ENCODE measurements at regions of chr3 and their contacts with region 1.

Region 1: DNA sequence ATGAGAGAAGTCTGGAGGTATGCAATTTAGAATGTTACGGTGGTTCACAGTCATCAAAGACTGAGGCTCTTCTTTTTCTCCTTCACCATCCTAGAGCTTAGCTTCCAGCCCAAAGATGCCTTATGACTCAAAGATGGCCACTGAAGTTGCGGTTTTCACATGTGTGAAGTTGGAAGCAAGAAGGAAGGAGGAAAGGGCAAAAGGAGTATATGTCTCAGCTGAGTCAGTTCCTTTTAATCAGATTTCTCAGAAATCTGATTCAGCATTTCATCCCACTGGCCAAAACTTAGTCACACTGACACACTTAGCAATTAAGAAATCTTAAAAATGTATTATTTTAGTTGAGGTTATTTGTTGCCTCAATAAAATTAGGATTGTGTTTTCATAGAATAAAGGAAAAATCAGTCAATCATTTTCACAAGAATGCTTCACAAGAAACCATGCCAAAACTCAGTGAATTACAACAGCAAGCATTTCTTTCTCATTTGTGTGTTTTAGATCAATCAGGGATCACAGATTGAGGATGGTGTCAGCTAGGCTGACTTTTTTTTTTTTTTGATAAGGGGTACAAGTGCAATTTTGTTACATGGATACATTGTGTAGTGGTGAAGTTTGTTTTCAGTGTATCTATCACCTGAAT is 211.1 kb upstream of the GADL1 start:
- DNase-seq: peak; percentile 94
- ATAC-seq: peak; percentile 89
- H3K4me3 ChIP-seq: peak overlapping the region; percentile 8; the same call in 1 of the 2 replicates
- H3K27ac ChIP-seq: peak overlapping the region; percentile 92
- H3K4me1 ChIP-seq: peaks cover 34% of the 10 kb centered on the region
- H3K27me3 ChIP-seq: no peaks in the 10 kb centered on the region
- CTCF ChIP-seq: no peak

Region 2: GRCh38 chr3:30970183-30970582 is 135.4 kb before region 1 on chr3:
- CTCF ChIA-PET with region 1: no interaction called
- POLR2A ChIA-PET with region 1: no interaction called
- intact Hi-C with region 1: loop called (anchors 10 kb)
- DNase-seq: peak; percentile 67
- ATAC-seq: peak; percentile 97
- H3K4me3 ChIP-seq: no peak overlapping the region
- H3K27ac ChIP-seq: no peak overlapping the region
- H3K4me1 ChIP-seq: no peaks in the 10 kb centered on the region
- H3K27me3 ChIP-seq: no peaks in the 10 kb centered on the region
- CTCF ChIP-seq: peak; percentile 86

Region 3: DNA sequence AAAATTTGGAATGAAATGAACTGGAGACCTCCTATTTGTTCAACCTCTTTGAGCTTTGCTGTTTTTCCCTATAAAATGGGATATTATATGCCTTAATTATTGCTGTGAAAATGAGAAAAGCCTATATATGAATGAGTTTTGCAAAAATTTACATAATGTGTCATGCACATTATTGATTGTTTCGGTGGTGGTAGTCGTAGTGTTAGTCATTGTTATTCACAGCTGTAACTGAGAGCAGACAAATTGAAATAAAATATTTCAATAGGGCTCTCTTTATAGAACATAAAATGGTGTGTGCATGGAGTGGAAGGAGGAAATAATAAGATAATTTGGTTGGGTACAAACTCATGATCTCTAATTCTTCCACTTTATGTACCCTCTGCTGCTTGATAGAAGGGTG is 57.4 kb before region 1 on chr3:
- CTCF ChIA-PET with region 1: no interaction called
- POLR2A ChIA-PET with region 1: no interaction called
- intact Hi-C with region 1: loop called (anchors 2 kb)
- DNase-seq: peak; percentile 51
- ATAC-seq: peak; percentile 66
- H3K4me3 ChIP-seq: no peak overlapping the region
- H3K27ac ChIP-seq: peak overlapping the region; percentile 82
- H3K4me1 ChIP-seq: peaks cover 36% of the 10 kb centered on the region
- H3K27me3 ChIP-seq: no peaks in the 10 kb centered on the region
- CTCF ChIP-seq: no peak

Region 4: GRCh38 chr3:31067009-31067408 is 38.5 kb before region 1 on chr3:
- CTCF ChIA-PET with region 1: no interaction called
- POLR2A ChIA-PET with region 1: no interaction called
- intact Hi-C with region 1: loop called (anchors 1 kb)
- DNase-seq: peak; percentile 96
- ATAC-seq: peak; percentile 99
- H3K4me3 ChIP-seq: no peak overlapping the region
- H3K27ac ChIP-seq: peak overlapping the region; percentile 48
- H3K4me1 ChIP-seq: peaks cover 12% of the 10 kb centered on the region
- H3K27me3 ChIP-seq: no peaks in the 10 kb centered on the region
- CTCF ChIP-seq: no peak

Measured in PC-3 (cell line).